Activated CD4-positive, alpha-beta memory T cell treated with anti-CD3 and anti-CD28 coated beads for 36 hours (primary cell): ENCODE measurements at regions of chr17 and their contacts with region 1.

Region 1: DNA sequence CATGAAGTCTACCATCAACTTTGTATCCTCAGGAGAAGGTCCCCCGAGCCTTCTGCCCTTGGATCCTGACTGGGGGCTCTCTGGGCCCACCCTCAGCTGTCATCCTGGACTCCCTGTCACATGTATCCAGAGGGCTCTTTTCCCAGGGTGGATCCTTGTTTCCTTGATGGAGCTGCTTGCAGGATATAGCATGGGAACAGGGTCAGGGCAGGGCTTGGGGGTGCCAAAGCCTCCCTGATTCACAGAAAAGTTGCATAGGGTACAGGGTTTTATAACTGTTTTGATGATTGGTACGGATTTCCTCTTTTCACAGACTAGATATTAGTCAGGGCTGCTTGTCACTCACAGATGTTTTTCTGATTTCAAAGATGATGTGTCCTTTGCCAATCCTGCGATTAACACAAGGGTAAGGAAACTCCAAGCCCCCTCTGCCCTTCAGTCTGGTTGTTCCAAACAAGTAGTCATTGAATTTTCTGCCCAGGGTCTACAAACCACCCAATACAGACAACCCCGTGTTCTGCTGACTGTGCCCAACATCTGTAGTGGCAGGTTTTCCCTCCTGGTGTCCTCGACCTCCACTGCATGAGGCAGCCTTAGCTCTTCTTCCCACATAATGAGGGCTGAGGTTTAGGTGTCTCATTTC is 20.6 kb upstream of the SLC35G3 start:
- DNase-seq: peak; percentile 51
- H3K4me3 Mint-ChIP-seq: peak overlapping the region; percentile 49
- H3K27ac Mint-ChIP-seq: peak overlapping the region; percentile 91
- H3K4me1 Mint-ChIP-seq: peaks cover 82% of the 10 kb centered on the region
- H3K27me3 Mint-ChIP-seq: no peaks in the 10 kb centered on the region

Region 2: DNA sequence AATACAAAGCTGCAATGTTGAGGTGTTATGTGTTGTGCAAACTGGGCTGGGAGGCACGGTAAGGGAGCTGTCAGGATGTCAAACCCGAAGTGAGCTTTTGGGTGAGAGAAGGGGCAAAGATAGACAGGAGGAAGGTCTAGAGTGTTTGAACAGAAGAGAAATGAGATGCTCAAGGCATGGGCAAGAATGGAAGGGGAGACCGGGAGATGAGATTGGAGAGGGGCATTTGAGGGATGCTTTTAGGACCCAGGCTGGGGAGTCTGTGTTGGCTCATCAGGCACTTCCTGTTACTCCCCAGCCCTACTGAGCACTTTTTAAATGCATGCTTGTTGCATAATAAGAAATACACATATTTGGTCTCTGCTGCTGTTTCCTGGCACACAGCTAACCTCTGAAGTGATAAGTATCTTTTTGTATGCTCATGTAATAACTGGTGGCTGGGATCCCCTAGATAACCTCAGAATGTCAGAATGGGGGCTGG is 53.4 kb before region 1 on chr17:
- CTCF ChIA-PET with region 1: no interaction called
- POLR2A ChIA-PET with region 1: no interaction called
- intact Hi-C with region 1: loop called (anchors 1 kb)
- DNase-seq: peak; percentile 26
- H3K4me3 Mint-ChIP-seq: peak overlapping the region; percentile 28
- H3K27ac Mint-ChIP-seq: peak overlapping the region; percentile 46
- H3K4me1 Mint-ChIP-seq: peaks cover 52% of the 10 kb centered on the region
- H3K27me3 Mint-ChIP-seq: no peaks in the 10 kb centered on the region

Region 3: GRCh38 chr17:35170968-35171771 is 43.6 kb before region 1 on chr17:
- CTCF ChIA-PET with region 1: interaction called, 3 read pairs
- POLR2A ChIA-PET with region 1: no interaction called
- intact Hi-C with region 1: loop called (anchors 2 kb)
- DNase-seq: peak; percentile 10
- H3K4me3 Mint-ChIP-seq: no peak overlapping the region
- H3K27ac Mint-ChIP-seq: peak overlapping the region; percentile 38
- H3K4me1 Mint-ChIP-seq: peaks cover 33% of the 10 kb centered on the region
- H3K27me3 Mint-ChIP-seq: no peaks in the 10 kb centered on the region

Region 4: GRCh38 chr17:35286120-35286781 is 71.5 kb after region 1 on chr17:
- CTCF ChIA-PET with region 1: no interaction called
- POLR2A ChIA-PET with region 1: no interaction called
- intact Hi-C with region 1: no loop called
- DNase-seq: peak; percentile 35
- H3K4me3 Mint-ChIP-seq: no peak overlapping the region
- H3K27ac Mint-ChIP-seq: peak overlapping the region; percentile 38
- H3K4me1 Mint-ChIP-seq: peaks cover 31% of the 10 kb centered on the region
- H3K27me3 Mint-ChIP-seq: no peaks in the 10 kb centered on the region